ENCODE measurements at regions of chr9 and their contacts with region 1.

Region 1: GRCh38 chr9:74721696-74722640 is 165.8 kb downstream of the TRPM6 start:
- DNase-seq: no peak
- H3K4me3 ChIP-seq: no peak overlapping the region
- H3K27ac ChIP-seq: no peak overlapping the region
- H3K4me1 ChIP-seq: no peaks in the 10 kb centered on the region
- H3K27me3 ChIP-seq: no peaks in the 10 kb centered on the region
- CTCF ChIP-seq: no peak
- EP300 ChIP-seq: no peak
- POLR2A ChIP-seq: no peak

Region 2: GRCh38 chr9:74609671-74610405 is 112.1 kb before region 1 on chr9:
- in situ Hi-C with region 1: loop called in 1 of 4 experiments (anchors 25 kb)
- intact Hi-C with region 1: no loop called
- DNase-seq: no peak
- H3K4me3 ChIP-seq: no peak overlapping the region
- H3K27ac ChIP-seq: no peak overlapping the region
- H3K4me1 ChIP-seq: no peaks in the 10 kb centered on the region
- H3K27me3 ChIP-seq: no peaks in the 10 kb centered on the region
- CTCF ChIP-seq: no peak
- EP300 ChIP-seq: no peak
- POLR2A ChIP-seq: no peak

Region 3: GRCh38 chr9:75120686-75121085 is 398.7 kb after region 1 on chr9:
- in situ Hi-C with region 1: no loop called
- intact Hi-C with region 1: no loop called
- DNase-seq: no peak
- H3K4me3 ChIP-seq: no peak overlapping the region
- H3K27ac ChIP-seq: no peak overlapping the region
- H3K4me1 ChIP-seq: no peaks in the 10 kb centered on the region
- H3K27me3 ChIP-seq: no peaks in the 10 kb centered on the region
- CTCF ChIP-seq: no peak
- EP300 ChIP-seq: no peak
- POLR2A ChIP-seq: no peak

Measured in transverse colon (tissue), 4 donors.